ENCODE measurements at regions of chr2 and their contacts with region 1.

Region 1: GRCh38 chr2:209423562-209424198 is at the start of gene MAP2:
- DNase-seq: peak; percentile 11
- H3K4me3 ChIP-seq: peak within 1 kb of the TSS; percentile 72
- H3K27ac ChIP-seq: no peak within 1 kb of the TSS
- H3K27me3 ChIP-seq: no peaks in the 10 kb centered on the region
- CTCF ChIP-seq: peak; percentile 71
- polyA plus RNA-seq, gene MAP2: 0.69 and 1.1 TPM in 2 replicates

Region 2: GRCh38 chr2:209398463-209398862 is 25.2 kb before region 1 on chr2:
- CTCF ChIA-PET with region 1: no interaction called
- POLR2A ChIA-PET with region 1: no interaction called
- DNase-seq: no peak
- H3K4me3 ChIP-seq: no peak overlapping the region
- H3K27ac ChIP-seq: no peak overlapping the region
- H3K27me3 ChIP-seq: no peaks in the 10 kb centered on the region
- CTCF ChIP-seq: no peak

Region 3: GRCh38 chr2:209458008-209458979 is 34.6 kb after region 1 on chr2:
- CTCF ChIA-PET with region 1: interaction called, 18 read pairs
- POLR2A ChIA-PET with region 1: no interaction called
- DNase-seq: no peak
- H3K4me3 ChIP-seq: no peak overlapping the region
- H3K27ac ChIP-seq: no peak overlapping the region
- H3K27me3 ChIP-seq: no peaks in the 10 kb centered on the region
- CTCF ChIP-seq: no peak

Region 4: GRCh38 chr2:209473930-209474419 is 50.3 kb after region 1 on chr2:
- CTCF ChIA-PET with region 1: interaction called, 16 read pairs
- POLR2A ChIA-PET with region 1: no interaction called
- DNase-seq: peak; percentile 70
- H3K4me3 ChIP-seq: no peak overlapping the region
- H3K27ac ChIP-seq: no peak overlapping the region
- H3K27me3 ChIP-seq: no peaks in the 10 kb centered on the region
- CTCF ChIP-seq: no peak

Region 5: GRCh38 chr2:209525834-209526281 is 102.2 kb after region 1 on chr2:
- CTCF ChIA-PET with region 1: interaction called, 40 read pairs
- POLR2A ChIA-PET with region 1: no interaction called
- DNase-seq: peak; percentile 67
- H3K4me3 ChIP-seq: no peak overlapping the region
- H3K27ac ChIP-seq: no peak overlapping the region
- H3K27me3 ChIP-seq: no peaks in the 10 kb centered on the region
- CTCF ChIP-seq: no peak

Region 6: DNA sequence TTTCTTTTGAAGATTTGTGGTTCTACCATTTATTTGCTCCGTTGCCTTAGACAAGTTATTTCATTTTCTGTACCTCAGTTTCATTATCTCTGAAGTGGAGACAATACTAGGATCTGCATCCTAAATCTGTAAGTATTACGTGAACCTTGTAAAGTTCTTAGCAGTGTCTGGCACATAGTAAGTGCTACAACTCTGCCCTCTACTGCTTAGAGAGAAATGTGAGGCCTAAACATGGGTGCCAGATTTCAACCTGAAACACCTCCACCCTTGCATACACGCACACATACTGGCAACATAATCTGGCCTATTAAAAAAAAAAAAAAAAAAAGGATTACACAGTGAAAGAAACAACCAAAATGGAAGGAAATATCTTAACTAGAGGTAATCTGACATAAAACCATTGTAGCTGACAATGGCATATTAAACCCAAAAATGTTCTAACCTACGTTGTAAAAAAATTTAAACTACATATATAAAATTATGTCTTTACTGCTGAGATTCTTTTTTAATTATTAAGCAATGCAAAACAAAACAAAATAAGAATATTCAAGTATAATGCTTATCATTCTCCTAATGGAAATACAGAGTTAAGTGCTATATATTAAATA is 132.8 kb after region 1 on chr2:
- CTCF ChIA-PET with region 1: interaction called, 87 read pairs
- POLR2A ChIA-PET with region 1: no interaction called
- DNase-seq: peak; percentile 8
- H3K4me3 ChIP-seq: no peak overlapping the region
- H3K27ac ChIP-seq: no peak overlapping the region
- H3K27me3 ChIP-seq: no peaks in the 10 kb centered on the region
- CTCF ChIP-seq: peak; percentile 75

Region 7: GRCh38 chr2:209577376-209578357 is 154.0 kb after region 1 on chr2:
- CTCF ChIA-PET with region 1: interaction called, 49 read pairs
- POLR2A ChIA-PET with region 1: no interaction called
- DNase-seq: no peak
- H3K4me3 ChIP-seq: no peak overlapping the region
- H3K27ac ChIP-seq: no peak overlapping the region
- H3K27me3 ChIP-seq: no peaks in the 10 kb centered on the region
- CTCF ChIP-seq: peak; percentile 38